ENCODE measurements at regions of chr15 and their contacts with region 1.

Region 1: GRCh38 chr15:74635228-74635627 is 19.6 kb downstream of the CLK3 start:
- DNase-seq: peak in 5 of 6 donors; percentile 39 to 84 (median 74)
- ATAC-seq: peak; percentile 71 to 88 (median 86)
- H3K4me3 ChIP-seq: no peak overlapping the region
- H3K27ac ChIP-seq: no peak overlapping the region
- H3K4me1 ChIP-seq: no peaks in the 10 kb centered on the region
- H3K27me3 ChIP-seq: no peaks in the 10 kb centered on the region
- CTCF ChIP-seq: peak; percentile 70 to 86 (median 82)

Region 2: GRCh38 chr15:74768771-74769342 is 133.6 kb after region 1 on chr15:
- intact Hi-C with region 1: loop called in 2 of 3 experiments (anchors 2 to 5 kb)
- DNase-seq: peak in 4 of 6 donors; percentile 39 to 81 (median 68)
- ATAC-seq: peak; percentile 54 to 79 (median 78)
- H3K4me3 ChIP-seq: no peak overlapping the region
- H3K27ac ChIP-seq: no peak overlapping the region
- H3K4me1 ChIP-seq: no peaks in the 10 kb centered on the region
- H3K27me3 ChIP-seq: no peaks in the 10 kb centered on the region
- CTCF ChIP-seq: peak; percentile 51 to 85 (median 74)

Region 3: GRCh38 chr15:74956648-74957300 is 321.5 kb after region 1 on chr15 and contains the start of gene RPP25:
- intact Hi-C with region 1: loop called in 1 of 3 experiments (anchors 10 kb)
- DNase-seq: peak; percentile 79 to 92 (median 86)
- ATAC-seq: peak; percentile 83 to 89 (median 86)
- H3K4me3 ChIP-seq: peak within 1 kb of the TSS; percentile 59 to 80 (median 70)
- H3K27ac ChIP-seq: peak within 1 kb of the TSS; percentile 65 to 91 (median 79)
- H3K4me1 ChIP-seq: peaks cover 5 to 16% (median 12%) of the 10 kb centered on the region in 3 donors
- H3K27me3 ChIP-seq: no peaks in the 10 kb centered on the region
- CTCF ChIP-seq: no peak
- total RNA-seq, gene RPP25: 3.0 to 6.7 (median 4.0) TPM

Measured in pancreas (tissue), 10 donors.